GM10248 (cell line): ENCODE measurements at regions of chr6 and their contacts with region 1.

Region 1: GRCh38 chr6:44304282-44305199 is 8.6 kb downstream of the AARS2 start:
- DNase-seq: peak; percentile 79
- CTCF ChIP-seq: peak; percentile 73

Region 2: DNA sequence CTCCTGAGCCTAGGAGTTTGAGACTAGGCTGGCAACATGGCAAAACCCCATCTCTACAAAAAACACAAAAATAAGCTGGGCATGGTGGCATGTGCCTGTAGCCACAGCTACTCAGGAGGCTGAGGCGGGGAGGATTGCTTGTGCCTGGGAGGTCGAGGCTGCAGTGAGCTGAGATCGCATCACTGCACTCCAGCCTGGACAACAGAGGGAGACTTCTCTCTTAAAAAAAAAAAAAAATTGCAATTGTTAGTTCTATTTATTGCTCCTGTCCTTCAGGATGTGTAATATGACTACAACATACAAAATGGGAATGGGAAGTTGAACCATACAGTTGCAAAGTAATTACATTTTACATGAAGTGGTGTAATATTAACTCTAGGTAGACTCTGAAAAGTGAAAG is 16.7 kb after region 1 on chr6:
- CTCF ChIA-PET with region 1: interaction called, 22 read pairs
- POLR2A ChIA-PET with region 1: no interaction called
- DNase-seq: no peak
- CTCF ChIP-seq: no peak

Region 3: DNA sequence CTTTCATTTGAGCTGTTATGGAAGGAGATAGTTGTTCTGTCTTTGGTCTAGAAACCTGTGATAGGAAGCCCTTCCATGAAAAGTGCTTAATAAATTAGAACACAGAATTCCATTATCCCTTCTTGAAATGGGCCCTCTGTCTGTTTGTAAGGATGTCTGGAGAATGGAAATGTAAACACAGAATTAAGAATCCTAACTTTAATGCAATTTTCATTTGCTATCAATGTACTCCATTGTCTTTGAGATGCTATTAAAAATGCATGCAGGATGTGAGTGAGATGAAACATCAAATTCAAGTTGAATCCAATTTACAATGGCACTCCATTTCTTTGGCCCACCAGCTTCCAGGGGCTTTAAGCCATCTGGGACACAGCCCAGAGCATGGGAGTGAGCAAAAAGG is 22.6 kb after region 1 on chr6:
- CTCF ChIA-PET with region 1: interaction called, 14 read pairs
- POLR2A ChIA-PET with region 1: no interaction called
- DNase-seq: no peak
- CTCF ChIP-seq: no peak